Adrenal gland (tissue), 19 donors: ENCODE measurements at regions of chr2 and their contacts with region 1.

Region 1: DNA sequence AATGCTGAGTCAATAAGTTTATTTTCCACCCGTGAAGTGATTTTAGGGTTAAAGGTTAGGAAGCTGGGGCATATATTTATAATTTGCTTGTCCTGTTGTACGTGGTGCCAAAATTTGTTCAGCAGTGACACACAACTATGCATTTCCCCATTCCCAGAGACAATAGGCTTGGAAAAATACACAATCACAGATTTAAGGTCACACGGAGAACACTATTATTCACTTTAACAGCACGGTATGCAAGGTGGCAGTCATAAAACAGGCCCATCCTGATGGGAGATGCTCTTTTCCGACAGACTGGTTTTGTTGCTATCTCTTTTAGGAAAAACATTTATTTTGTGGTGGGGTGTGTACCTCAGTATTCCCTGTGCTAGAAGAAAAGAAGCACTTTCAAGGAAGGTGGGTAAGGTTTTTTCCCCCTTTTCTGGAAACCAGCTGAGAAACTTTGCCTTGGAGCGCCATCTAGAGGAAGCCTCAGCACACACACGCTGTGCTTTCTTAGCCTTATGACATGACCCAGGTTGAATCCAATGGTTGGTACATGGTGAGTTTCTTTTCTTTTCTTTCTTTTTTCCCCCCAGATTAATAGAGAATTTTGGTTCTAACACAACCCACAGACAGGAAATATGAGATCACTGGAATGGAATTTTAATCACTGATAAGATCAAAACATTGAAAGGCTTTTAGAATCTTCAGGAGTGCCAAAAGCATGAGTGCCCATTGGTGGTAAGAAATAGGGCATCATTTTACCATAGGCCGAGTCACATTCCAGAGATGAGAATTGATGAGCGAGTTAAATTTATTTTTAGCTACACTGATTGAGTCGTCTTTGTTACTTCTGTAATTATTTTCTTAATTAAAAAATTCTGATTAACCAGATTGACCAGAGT is 332.1 kb downstream of the AGPS start:
- DNase-seq: peak; percentile 39 to 75 (median 54)
- H3K4me3 ChIP-seq: no peak overlapping the region
- H3K27ac ChIP-seq: no peak overlapping the region
- H3K4me1 ChIP-seq: peaks cover 4 to 9% of the 10 kb centered on the region in 2 donors
- H3K27me3 ChIP-seq: no peaks in the 10 kb centered on the region
- CTCF ChIP-seq: peak; percentile 79 to 86 (median 82)
- POLR2A ChIP-seq: no peak

Region 2: DNA sequence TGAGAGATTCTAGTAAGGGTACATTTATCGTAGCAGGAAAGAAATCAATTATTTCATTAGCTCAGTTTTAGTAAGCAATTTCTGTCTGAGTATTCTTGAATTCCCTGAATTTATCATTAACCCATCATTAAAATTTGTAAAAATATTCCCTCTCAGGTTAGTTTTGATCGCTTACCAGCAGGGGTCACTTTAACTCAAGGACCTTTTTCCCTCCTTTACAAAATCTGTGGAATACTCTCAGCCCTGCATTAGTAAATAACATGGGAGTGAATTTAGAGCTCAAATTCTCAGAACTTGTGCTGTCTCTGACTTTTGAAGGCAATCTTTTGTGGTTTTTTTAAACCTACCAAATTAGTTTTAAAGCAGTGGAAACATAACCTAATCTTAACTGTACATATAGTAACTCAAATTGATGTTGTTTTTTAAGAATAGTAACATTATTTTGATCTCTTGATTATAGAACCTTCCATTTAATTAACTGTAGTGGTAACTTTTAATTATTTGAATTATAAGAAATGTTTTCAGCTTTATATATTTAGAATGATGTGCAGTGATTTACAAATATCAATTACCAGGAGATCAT is 234.8 kb before region 1 on chr2:
- intact Hi-C with region 1: loop called in 1 of 2 experiments (anchors 10 kb)
- DNase-seq: no peak
- H3K4me3 ChIP-seq: no peak overlapping the region
- H3K27ac ChIP-seq: no peak overlapping the region
- H3K4me1 ChIP-seq: no peaks in the 10 kb centered on the region
- H3K27me3 ChIP-seq: no peaks in the 10 kb centered on the region
- CTCF ChIP-seq: peak; percentile 36 to 62 (median 50)
- POLR2A ChIP-seq: no peak